ENCODE measurements at regions of chr3 and their contacts with region 1.

Region 1: GRCh38 chr3:116770815-116771450 is 61.4 kb downstream of the TUSC7 start:
- DNase-seq: peak; percentile 80
- ATAC-seq: peak; percentile 99
- H3K4me3 ChIP-seq: no peak overlapping the region
- H3K27ac ChIP-seq: no peak overlapping the region
- H3K4me1 ChIP-seq: no peaks in the 10 kb centered on the region
- H3K27me3 ChIP-seq: no peaks in the 10 kb centered on the region
- CTCF ChIP-seq: peak; percentile 100
- POLR2A ChIP-seq: no peak
- RAD21 ChIP-seq: peak; percentile 98

Region 2: GRCh38 chr3:116841003-116841735 is 70.2 kb after region 1 on chr3:
- CTCF ChIA-PET with region 1: no interaction called
- POLR2A ChIA-PET with region 1: no interaction called
- dilution Hi-C with region 1: no loop called
- in situ Hi-C with region 1: no loop called
- intact Hi-C with region 1: no loop called
- DNase-seq: no peak
- ATAC-seq: no peak
- H3K4me3 ChIP-seq: no peak overlapping the region
- H3K27ac ChIP-seq: no peak overlapping the region
- H3K4me1 ChIP-seq: no peaks in the 10 kb centered on the region
- H3K27me3 ChIP-seq: no peaks in the 10 kb centered on the region
- CTCF ChIP-seq: no peak
- POLR2A ChIP-seq: no peak
- RAD21 ChIP-seq: no peak

Region 3: DNA sequence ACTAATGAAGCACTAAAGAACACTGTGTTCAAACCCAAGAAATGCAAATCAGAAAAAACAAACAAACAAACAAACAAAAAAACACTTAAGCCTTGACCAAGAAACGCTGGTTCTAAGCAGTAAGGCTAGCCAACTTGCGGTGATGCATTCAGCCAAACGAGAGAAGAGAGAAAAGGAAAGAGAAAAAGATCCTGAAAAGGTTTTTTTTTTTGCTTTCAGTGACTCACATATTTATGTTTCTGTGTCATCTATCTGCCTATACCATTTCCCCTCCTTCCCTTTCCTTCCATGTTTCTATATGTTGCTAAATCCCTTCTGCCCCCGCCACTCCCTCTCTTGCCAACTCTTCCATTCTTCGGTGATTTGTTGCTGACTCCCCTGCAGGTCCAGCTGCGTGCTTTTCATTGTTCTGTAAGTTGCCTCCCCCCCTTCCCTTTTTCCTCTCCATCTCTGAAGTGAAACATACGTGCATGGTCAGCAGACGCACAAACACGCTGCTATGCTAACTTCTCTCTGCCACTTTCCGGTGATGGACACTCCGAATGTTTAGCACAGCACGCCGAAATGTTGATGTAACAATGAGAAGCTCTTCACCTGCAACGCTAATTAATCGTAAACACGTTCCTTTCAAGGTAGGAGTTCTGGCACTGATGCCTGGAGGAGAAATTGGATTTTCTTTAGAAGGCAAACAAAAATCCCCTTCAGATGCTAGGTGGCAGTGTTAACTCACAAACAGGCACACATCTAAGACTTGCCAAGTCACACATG is 93.1 kb after region 1 on chr3:
- CTCF ChIA-PET with region 1: no interaction called
- POLR2A ChIA-PET with region 1: no interaction called
- dilution Hi-C with region 1: no loop called
- in situ Hi-C with region 1: no loop called
- intact Hi-C with region 1: loop called (anchors 1 kb)
- DNase-seq: peak; percentile 64
- ATAC-seq: peak; percentile 66
- H3K4me3 ChIP-seq: peak overlapping the region; percentile 82
- H3K27ac ChIP-seq: no peak overlapping the region
- H3K4me1 ChIP-seq: no peaks in the 10 kb centered on the region
- H3K27me3 ChIP-seq: no peaks in the 10 kb centered on the region
- CTCF ChIP-seq: peak; percentile 66
- POLR2A ChIP-seq: no peak
- RAD21 ChIP-seq: peak; percentile 74

Region 4: DNA sequence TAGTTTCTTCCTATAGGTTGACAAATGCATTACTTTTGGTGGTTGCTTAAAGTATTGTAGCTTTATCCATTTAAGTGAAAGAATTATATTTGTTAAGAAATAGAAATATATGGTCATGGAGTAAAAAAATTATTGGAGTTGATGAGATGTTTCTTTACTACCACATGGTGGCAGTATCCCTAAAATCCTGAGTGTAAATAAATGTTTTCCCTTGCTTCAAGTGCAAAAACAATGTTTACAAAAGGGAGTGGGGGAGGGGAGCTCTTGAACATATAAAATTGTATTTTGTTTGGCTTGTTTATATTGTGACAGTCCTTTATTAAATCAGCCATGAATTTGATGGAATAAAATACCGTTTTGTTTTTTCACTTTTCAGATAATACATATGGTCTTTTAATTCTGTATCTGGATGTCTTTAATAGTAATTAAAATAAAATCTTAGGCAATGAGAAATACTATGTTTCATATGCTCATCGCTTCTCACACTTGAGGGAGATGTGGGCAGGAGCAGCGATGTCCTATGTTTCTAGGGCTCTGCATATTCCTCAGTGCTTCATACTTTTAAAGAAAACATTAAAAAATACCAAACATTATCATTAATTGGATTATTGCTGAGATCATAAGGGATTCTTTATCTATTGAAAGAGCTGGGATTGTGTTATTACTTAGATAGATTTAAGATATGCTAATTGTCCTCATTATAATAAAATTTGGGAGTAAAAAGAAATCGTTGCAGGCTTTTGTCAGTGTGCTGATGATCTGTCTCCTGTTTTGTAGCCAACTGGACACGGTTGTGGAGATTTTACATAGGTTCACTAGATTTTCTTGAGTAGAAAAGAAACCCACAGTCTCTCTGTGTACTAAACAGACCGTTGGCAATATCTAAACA is 288.4 kb after region 1 on chr3:
- CTCF ChIA-PET with region 1: no interaction called
- POLR2A ChIA-PET with region 1: no interaction called
- dilution Hi-C with region 1: no loop called
- in situ Hi-C with region 1: no loop called
- intact Hi-C with region 1: loop called (anchors 2 kb)
- DNase-seq: peak; percentile 46
- ATAC-seq: no peak
- H3K4me3 ChIP-seq: no peak overlapping the region
- H3K27ac ChIP-seq: no peak overlapping the region
- H3K4me1 ChIP-seq: peaks cover 3% of the 10 kb centered on the region; the same call in 1 of the 2 replicates
- H3K27me3 ChIP-seq: no peaks in the 10 kb centered on the region
- CTCF ChIP-seq: peak; percentile 62
- POLR2A ChIP-seq: no peak
- RAD21 ChIP-seq: peak; percentile 50

Region 5: DNA sequence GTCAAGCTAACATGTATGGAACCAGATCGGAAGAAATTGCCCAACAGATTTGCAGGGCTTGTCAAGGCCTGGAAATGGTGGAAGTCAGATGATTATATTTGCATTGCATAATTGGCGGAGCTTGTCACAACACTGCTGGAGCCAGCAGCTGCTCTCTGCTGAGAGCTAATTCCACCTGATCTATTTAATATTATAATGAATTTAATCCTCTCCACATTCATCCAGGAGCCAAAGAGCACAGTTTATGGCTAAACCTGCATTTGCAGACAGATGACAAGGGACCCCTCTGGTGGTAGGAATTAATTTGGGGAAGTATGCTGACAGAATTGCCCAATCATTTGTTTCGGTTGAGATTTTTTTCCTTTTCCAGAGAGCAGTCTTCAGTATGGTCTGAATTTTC is 668.9 kb after region 1 on chr3:
- CTCF ChIA-PET with region 1: no interaction called
- POLR2A ChIA-PET with region 1: no interaction called
- dilution Hi-C with region 1: no loop called
- in situ Hi-C with region 1: no loop called
- intact Hi-C with region 1: loop called (anchors 10 kb)
- DNase-seq: peak; percentile 45
- ATAC-seq: peak; percentile 57
- H3K4me3 ChIP-seq: no peak overlapping the region
- H3K27ac ChIP-seq: no peak overlapping the region
- H3K4me1 ChIP-seq: 0 out of 2 replicates have a peak, but pooled peaks cover 1% of the 10 kb centered on the region
- H3K27me3 ChIP-seq: no peaks in the 10 kb centered on the region
- CTCF ChIP-seq: peak; percentile 59
- POLR2A ChIP-seq: no peak
- RAD21 ChIP-seq: peak; percentile 47

Region 6: DNA sequence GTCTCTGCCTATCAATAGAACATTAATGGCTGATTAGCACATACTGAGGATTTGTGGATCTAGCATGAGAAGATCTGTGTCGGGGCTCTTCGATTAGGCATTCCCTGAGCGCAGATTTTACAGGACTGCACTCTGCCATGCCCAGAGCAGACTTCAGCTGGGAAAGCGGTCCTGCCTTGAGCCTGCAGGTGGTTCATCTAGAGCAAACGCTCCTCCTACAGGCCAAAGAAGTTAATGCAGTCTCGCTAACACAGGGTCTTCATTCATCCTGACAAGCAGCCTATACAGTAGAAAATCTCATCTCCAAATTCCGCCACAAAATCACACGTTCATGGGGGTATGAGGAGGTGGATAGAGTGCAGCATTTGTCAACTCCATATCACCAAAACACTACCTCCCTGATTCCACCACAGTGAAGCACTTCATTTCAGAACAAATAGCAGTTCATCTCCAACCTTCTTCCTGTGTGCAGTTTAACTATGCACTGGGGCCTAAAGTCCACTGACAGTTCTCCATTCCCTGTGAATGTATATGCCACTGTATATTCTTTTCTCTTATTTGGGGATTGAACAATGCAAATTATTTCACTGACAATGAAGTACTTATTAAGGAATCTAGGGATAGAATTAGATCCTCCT is 1857.9 kb after region 1 on chr3:
- CTCF ChIA-PET with region 1: interaction called, 3 read pairs
- POLR2A ChIA-PET with region 1: no interaction called
- dilution Hi-C with region 1: no loop called
- in situ Hi-C with region 1: loop called (anchors 10 kb)
- intact Hi-C with region 1: loop called (anchors 2 kb)
- DNase-seq: peak; percentile 72
- ATAC-seq: peak; percentile 100
- H3K4me3 ChIP-seq: no peak overlapping the region
- H3K27ac ChIP-seq: no peak overlapping the region
- H3K4me1 ChIP-seq: no peaks in the 10 kb centered on the region
- H3K27me3 ChIP-seq: no peaks in the 10 kb centered on the region
- CTCF ChIP-seq: peak; percentile 79
- POLR2A ChIP-seq: no peak
- RAD21 ChIP-seq: peak; percentile 83